ENCODE measurements at regions of chr2 and their contacts with region 1.

Region 1: DNA sequence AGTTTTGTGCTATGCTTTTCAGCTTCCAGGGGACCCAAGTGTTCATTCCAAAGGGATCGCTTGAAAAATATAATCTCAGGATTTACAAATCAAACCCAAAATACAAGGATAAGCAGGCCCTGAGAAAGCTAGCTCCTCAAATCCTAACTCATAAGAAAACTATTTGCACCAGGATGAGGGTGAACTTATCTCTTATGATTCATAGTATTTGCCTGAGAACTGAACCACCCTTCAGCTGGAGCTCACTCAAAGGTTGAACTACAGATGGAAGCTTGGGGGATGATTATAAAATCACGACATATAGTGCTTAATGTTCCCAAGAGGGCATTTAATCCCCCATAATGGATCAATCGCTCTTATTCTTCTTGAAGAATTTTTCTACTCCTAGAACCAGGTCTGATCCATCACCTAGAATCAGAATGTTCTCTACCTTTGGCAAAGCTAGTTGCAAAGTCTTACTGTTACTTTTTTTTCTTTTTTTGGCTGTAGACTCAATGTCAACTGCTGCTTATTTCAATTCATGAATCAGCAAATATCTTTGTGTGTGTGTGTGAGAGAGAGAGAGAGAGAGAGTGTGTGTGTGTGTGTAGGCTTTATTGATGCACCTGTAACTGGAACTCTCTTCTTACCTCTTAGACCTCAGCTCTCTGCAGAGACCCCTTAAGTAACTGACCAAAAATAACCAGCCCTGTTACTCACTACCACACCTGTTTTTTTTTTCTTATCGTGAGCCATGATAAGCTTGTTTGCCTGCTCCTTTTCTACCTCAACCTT is 44.8 kb downstream of the ARL4C start:
- DNase-seq: peak in 4 of 5 donors; percentile 38 to 65 (median 55)
- H3K4me3 ChIP-seq: peak overlapping the region; percentile 3 to 83
- H3K4me3 Mint-ChIP-seq: peak overlapping the region; percentile 64 to 97 (median 88)
- H3K27ac ChIP-seq: peak overlapping the region; percentile 90
- H3K27ac Mint-ChIP-seq: peak overlapping the region; percentile 72 to 99 (median 94)
- H3K4me1 ChIP-seq: peaks cover 91% of the 10 kb centered on the region
- H3K4me1 Mint-ChIP-seq: peaks cover 58 to 93% (median 74%) of the 10 kb centered on the region in 4 donors
- H3K27me3 ChIP-seq: no peaks in the 10 kb centered on the region
- H3K27me3 Mint-ChIP-seq: no peaks in the 10 kb centered on the region

Region 2: DNA sequence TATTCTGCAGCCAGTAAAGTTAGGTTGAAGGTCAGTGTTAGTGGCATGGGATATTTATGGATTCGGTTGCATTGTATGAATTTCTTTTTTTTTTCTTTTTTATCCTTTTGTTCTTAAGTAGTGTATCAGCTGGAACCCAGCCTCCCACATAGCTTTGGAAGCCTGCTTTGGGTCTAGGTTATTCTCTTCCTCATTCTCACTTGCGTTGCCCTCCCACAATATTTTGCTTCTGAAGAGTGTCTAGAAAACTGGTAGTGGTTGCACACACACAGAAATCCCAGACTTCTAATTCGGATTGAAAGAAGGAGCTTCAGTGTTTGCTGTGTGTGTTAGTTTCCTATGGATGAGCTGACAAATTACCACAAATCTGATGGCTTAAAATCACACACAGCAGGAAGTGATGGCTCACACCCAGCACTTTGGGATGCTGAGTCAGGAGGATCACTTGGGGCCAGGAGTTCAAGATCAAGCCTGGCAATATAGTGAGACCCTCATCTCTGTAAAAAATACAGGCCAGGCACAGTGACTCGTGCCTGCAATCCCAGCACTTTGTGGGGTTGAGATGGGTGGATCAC is 59.9 kb before region 1 on chr2:
- CTCF ChIA-PET with region 1: interaction called, 9 read pairs
- POLR2A ChIA-PET with region 1: interaction called, 5 read pairs
- intact Hi-C with region 1: loop called (anchors 5 kb)
- DNase-seq: no peak
- H3K4me3 ChIP-seq: no peak overlapping the region
- H3K4me3 Mint-ChIP-seq: peak overlapping the region in 6 of 8 donors; percentile 8 to 65 (median 40)
- H3K27ac ChIP-seq: no peak overlapping the region
- H3K27ac Mint-ChIP-seq: peak overlapping the region; percentile 50 to 96 (median 85)
- H3K4me1 ChIP-seq: peaks cover 61% of the 10 kb centered on the region
- H3K4me1 Mint-ChIP-seq: peaks cover 47 to 65% (median 56%) of the 10 kb centered on the region in 4 donors
- H3K27me3 ChIP-seq: no peaks in the 10 kb centered on the region
- H3K27me3 Mint-ChIP-seq: no peaks in the 10 kb centered on the region

Region 3: DNA sequence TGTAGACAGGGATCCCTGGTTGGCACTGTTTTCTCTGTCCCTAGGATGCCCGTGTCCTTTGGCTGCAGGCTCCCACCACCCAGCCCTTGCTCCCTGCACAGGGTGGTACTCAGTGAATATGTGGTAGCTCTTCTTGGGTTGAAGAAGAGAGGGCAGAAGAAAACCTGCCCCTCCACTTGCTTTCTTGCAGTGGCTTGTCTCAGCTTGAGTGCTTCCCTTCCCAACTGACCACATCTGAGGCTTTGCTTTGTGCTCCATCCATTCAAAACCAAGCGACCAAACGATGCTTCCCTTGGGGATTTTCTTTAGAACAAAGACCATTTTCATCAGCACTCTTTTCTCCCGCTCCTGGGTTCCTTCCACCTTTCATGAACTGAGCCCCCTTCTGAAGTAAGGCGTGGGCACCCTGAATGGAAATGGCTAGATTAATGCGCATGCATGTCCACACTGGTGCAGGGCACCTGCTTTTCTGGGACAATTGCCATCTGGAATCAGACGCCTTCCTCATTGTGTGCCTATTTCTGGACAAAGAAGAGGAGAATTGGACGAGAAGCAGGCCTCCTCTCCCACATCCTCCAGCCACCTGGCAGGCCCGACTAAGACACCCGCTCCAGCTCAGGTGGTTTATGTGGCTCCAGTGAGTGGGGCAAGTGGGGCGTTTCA is 14.3 kb before region 1 on chr2:
- CTCF ChIA-PET with region 1: interaction called, 5 read pairs
- POLR2A ChIA-PET with region 1: interaction called, 743 read pairs
- intact Hi-C with region 1: no loop called
- DNase-seq: no peak
- H3K4me3 ChIP-seq: no peak overlapping the region
- H3K4me3 Mint-ChIP-seq: peak overlapping the region in 3 of 8 donors; percentile 6 to 43 (median 22)
- H3K27ac ChIP-seq: no peak overlapping the region
- H3K27ac Mint-ChIP-seq: peak overlapping the region in 2 of 7 donors; percentile 68 to 88
- H3K4me1 ChIP-seq: peaks cover 72% of the 10 kb centered on the region
- H3K4me1 Mint-ChIP-seq: peaks cover 46 to 88% (median 65%) of the 10 kb centered on the region in 4 donors
- H3K27me3 ChIP-seq: no peaks in the 10 kb centered on the region
- H3K27me3 Mint-ChIP-seq: no peaks in the 10 kb centered on the region

Region 4: GRCh38 chr2:234463626-234464290 is 11.7 kb after region 1 on chr2:
- CTCF ChIA-PET with region 1: interaction called, 11 read pairs
- POLR2A ChIA-PET with region 1: interaction called, 379 read pairs
- intact Hi-C with region 1: loop called (anchors 1 kb)
- DNase-seq: peak; percentile 83 to 90 (median 87)
- H3K4me3 ChIP-seq: peak overlapping the region; percentile 12 to 48
- H3K4me3 Mint-ChIP-seq: peak overlapping the region; percentile 69 to 86 (median 81)
- H3K27ac ChIP-seq: peak overlapping the region; percentile 86
- H3K27ac Mint-ChIP-seq: peak overlapping the region; percentile 88 to 99 (median 97)
- H3K4me1 ChIP-seq: peaks cover 81% of the 10 kb centered on the region
- H3K4me1 Mint-ChIP-seq: peaks cover 49 to 94% (median 73%) of the 10 kb centered on the region in 4 donors
- H3K27me3 ChIP-seq: no peaks in the 10 kb centered on the region
- H3K27me3 Mint-ChIP-seq: no peaks in the 10 kb centered on the region

Region 5: GRCh38 chr2:234478121-234478858 is 26.3 kb after region 1 on chr2:
- CTCF ChIA-PET with region 1: interaction called, 14 read pairs
- POLR2A ChIA-PET with region 1: interaction called, 72 read pairs
- intact Hi-C with region 1: loop called (anchors 1 kb)
- DNase-seq: no peak
- H3K4me3 ChIP-seq: no peak overlapping the region
- H3K4me3 Mint-ChIP-seq: peak overlapping the region in 1 of 8 donors; percentile 24
- H3K27ac ChIP-seq: no peak overlapping the region
- H3K27ac Mint-ChIP-seq: peak overlapping the region in 4 of 7 donors; percentile 17 to 78 (median 74)
- H3K4me1 ChIP-seq: peaks cover 55% of the 10 kb centered on the region
- H3K4me1 Mint-ChIP-seq: peaks cover 36 to 85% (median 67%) of the 10 kb centered on the region in 4 donors
- H3K27me3 ChIP-seq: no peaks in the 10 kb centered on the region
- H3K27me3 Mint-ChIP-seq: no peaks in the 10 kb centered on the region

Region 6: GRCh38 chr2:234483568-234484251 is 31.7 kb after region 1 on chr2:
- CTCF ChIA-PET with region 1: interaction called, 14 read pairs
- POLR2A ChIA-PET with region 1: interaction called, 859 read pairs
- intact Hi-C with region 1: loop called (anchors 1 kb)
- DNase-seq: peak; percentile 86 to 95 (median 88)
- H3K4me3 ChIP-seq: peak overlapping the region in 1 of 2 donors; percentile 5
- H3K4me3 Mint-ChIP-seq: peak overlapping the region; percentile 52 to 87 (median 76)
- H3K27ac ChIP-seq: peak overlapping the region; percentile 98
- H3K27ac Mint-ChIP-seq: peak overlapping the region; percentile 97 to 99 (median 98)
- H3K4me1 ChIP-seq: peaks cover 81% of the 10 kb centered on the region
- H3K4me1 Mint-ChIP-seq: peaks cover 64 to 94% (median 78%) of the 10 kb centered on the region in 4 donors
- H3K27me3 ChIP-seq: no peaks in the 10 kb centered on the region
- H3K27me3 Mint-ChIP-seq: no peaks in the 10 kb centered on the region

Region 7: GRCh38 chr2:234488913-234489451 is 36.9 kb after region 1 on chr2:
- CTCF ChIA-PET with region 1: interaction called, 13 read pairs
- POLR2A ChIA-PET with region 1: interaction called, 859 read pairs
- intact Hi-C with region 1: loop called (anchors 2 kb)
- DNase-seq: peak; percentile 81 to 94 (median 84)
- H3K4me3 ChIP-seq: peak overlapping the region in 1 of 2 donors; percentile 25
- H3K4me3 Mint-ChIP-seq: peak overlapping the region; percentile 84 to 100 (median 98)
- H3K27ac ChIP-seq: peak overlapping the region; percentile 98
- H3K27ac Mint-ChIP-seq: peak overlapping the region; percentile 97 to 100 (median 99)
- H3K4me1 ChIP-seq: peaks cover 87% of the 10 kb centered on the region
- H3K4me1 Mint-ChIP-seq: peaks cover 63 to 94% (median 81%) of the 10 kb centered on the region in 4 donors
- H3K27me3 ChIP-seq: no peaks in the 10 kb centered on the region
- H3K27me3 Mint-ChIP-seq: no peaks in the 10 kb centered on the region